ENCODE measurements at regions of chr16 and their contacts with region 1.

Region 1: GRCh38 chr16:30893744-30894539 is at the start of gene BCL7C:
- DNase-seq: peak; percentile 97

Region 2: DNA sequence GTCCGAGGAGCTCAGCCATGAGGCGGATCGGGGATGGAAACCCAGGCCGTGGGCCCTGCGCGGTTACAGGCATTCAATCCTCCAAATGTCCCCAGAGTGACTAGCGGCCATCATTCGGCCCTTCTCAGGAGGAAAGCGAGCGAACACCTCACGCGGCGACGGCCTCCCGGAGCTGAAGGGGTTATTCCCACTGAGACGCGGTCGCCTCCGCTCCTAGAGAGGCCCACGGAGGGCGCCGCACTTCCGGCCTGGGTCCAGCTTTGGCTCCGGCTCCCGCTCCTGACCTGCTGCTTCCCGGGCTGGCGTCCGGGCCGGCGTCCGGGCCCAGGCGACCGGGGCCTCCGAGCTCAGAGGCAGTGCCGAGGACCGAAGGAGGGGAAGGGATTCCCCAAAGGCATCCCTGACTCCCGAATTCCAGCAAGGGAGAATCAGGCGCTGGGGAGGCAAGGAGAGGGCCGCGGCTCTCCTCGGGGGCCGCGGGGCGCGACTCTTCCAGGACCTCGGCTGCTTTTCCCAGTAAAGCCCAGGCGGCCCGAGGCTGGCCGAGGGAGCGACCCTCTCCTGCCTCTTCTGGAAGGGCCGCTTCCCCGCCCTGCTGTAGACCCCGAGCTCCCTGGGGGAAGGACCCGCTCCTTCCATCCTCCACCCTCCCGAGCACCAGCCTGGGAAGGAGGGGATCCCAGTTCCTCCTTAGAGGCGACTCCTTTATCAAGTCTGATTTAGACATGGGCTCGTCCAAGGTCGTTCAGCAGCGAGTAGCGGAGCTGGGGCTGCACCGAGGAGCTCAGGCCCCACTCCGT is 88.4 kb before region 1 on chr16:
- CTCF ChIA-PET with region 1: no interaction called
- POLR2A ChIA-PET with region 1: interaction called, 16 read pairs
- DNase-seq: peak; percentile 95

Region 3: DNA sequence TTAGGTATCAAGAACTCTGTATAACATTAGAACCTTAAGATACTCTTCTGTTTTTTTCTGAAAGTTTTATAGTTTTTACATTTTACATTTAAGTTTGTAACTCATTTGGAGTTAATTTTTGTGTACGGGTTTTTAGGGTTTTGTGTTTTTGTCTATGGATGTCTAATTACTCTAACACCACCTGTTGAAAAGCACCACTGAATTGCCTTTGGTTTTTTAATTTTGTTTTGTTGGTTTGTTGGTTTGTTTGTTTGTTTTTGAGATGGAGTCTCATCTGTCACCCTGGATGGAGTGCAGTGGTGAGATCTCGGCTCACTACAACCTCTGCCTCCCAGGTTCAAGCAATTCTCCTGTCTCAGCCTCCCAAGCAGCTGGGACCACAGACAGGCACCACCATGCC is 77.2 kb before region 1 on chr16:
- CTCF ChIA-PET with region 1: no interaction called
- POLR2A ChIA-PET with region 1: no interaction called
- DNase-seq: no peak

Region 4: DNA sequence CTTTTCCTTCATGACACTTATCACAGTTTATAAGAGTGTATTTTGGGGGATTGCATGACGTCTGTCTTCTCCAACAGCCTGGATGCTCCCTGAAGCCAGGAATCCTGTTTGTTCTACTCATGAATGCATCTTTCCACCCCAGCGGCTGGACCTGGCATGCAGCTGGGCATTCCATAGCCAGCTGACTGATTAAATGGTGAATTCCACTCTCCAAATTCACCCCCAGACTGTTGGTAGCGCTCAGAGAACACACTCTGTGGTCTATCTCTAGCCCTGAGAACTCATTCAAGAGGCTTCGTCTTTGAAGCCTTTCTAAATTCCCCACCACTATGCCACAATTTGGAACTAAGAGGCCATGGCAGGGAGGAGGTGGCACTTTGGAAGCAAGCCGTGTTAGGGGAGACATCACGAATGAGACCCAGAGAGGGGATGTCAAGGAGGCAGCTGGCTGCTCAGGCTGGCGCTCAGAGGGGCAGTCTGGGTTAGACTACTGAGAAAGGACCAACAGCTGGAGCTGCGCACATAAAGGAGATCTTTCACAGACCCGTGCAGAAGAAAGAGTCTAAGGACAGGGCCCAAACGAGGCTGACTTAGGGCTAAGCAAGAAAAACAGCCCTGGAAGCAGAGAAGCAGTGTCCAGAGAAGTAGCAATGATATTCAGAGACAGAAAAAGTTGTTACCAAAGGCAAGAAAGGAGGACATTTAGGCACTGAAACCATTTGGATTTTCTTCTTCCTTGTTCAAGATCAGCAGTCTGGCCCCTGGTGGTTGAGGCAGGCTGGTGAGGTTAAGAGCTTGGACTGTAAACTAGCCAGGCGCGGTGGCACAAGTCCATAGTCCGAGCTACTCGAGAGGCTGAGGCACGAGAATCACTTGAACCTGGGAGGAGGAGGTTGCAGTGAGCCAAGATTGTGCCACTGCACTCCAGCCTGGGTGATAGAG is 64.5 kb before region 1 on chr16:
- CTCF ChIA-PET with region 1: no interaction called
- POLR2A ChIA-PET with region 1: no interaction called
- DNase-seq: no peak

Region 5: DNA sequence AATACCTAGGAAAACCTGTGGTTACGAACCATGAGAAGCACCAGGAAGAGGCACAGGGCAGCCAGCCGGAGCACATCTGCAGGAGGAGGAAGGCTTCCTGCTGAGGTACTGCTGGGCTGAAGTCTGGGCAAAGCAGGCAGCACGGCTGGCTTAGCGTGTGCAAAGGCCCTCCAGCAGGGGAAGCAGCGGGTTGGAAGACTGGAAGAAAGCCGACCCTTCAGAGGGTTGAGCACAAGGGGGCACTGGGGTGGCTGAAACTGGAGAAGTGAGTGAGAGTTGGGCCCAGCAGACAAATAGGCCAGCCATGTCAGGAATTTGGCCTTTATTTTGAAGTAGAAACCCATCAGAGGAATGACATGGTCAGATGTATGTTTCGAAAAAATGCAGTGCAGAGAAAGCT is 78.9 kb after region 1 on chr16:
- CTCF ChIA-PET with region 1: no interaction called
- POLR2A ChIA-PET with region 1: no interaction called
- DNase-seq: peak; percentile 66

Measured in HEK293T (cell line).